ENCODE measurements at regions of chr4 and their contacts with region 1.

Region 1: DNA sequence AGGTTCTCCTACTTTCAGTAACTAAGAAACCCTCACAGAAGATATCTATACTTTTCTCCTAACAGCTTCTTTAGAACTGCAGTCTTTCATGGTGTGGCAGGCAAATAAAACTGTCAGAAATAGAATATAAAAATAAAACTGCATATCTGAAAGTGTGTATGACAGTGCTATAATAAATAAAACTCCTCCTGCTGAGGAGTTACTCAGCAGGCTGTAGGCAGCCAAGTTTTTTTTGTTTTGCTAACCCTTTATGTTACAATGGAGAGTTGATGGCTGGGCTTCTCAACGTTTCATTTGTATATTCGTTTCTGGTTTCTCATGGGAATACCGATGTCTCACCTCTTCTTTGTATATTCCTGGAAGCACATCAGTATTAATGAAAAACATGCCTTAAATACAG is 18.2 kb upstream of the UGT2B10 start:
- DNase-seq: no peak
- ATAC-seq: no peak
- H3K4me3 Mint-ChIP-seq: no peak overlapping the region
- H3K27ac Mint-ChIP-seq: no peak overlapping the region
- H3K4me1 Mint-ChIP-seq: no peaks in the 10 kb centered on the region
- H3K27me3 Mint-ChIP-seq: no peaks in the 10 kb centered on the region

Region 2: GRCh38 chr4:69104719-69105275 is 307.2 kb after region 1 on chr4:
- CTCF ChIA-PET with region 1: no interaction called
- POLR2A ChIA-PET with region 1: no interaction called
- intact Hi-C with region 1: loop called in 1 of 2 experiments (anchors 5 kb)
- DNase-seq: no peak
- ATAC-seq: no peak
- H3K4me3 Mint-ChIP-seq: no peak overlapping the region
- H3K27ac Mint-ChIP-seq: no peak overlapping the region
- H3K4me1 Mint-ChIP-seq: no peaks in the 10 kb centered on the region
- H3K27me3 Mint-ChIP-seq: no peaks in the 10 kb centered on the region

Measured in activated CD4-positive, alpha-beta T cell treated with anti-CD3 and anti-CD28 coated beads for 36 hours (primary cell).